ENCODE measurements at regions of chr19 and their contacts with region 1.

Region 1: GRCh38 chr19:5803752-5804515 is 933 bp upstream of the NRTN start:
- DNase-seq: peak; percentile 94
- ATAC-seq: peak; percentile 96
- H3K4me3 Mint-ChIP-seq: peak overlapping the region; percentile 70
- H3K27ac Mint-ChIP-seq: peak overlapping the region; percentile 60
- H3K4me1 Mint-ChIP-seq: peaks cover 25% of the 10 kb centered on the region
- H3K27me3 Mint-ChIP-seq: peaks cover 42% of the 10 kb centered on the region

Region 2: DNA sequence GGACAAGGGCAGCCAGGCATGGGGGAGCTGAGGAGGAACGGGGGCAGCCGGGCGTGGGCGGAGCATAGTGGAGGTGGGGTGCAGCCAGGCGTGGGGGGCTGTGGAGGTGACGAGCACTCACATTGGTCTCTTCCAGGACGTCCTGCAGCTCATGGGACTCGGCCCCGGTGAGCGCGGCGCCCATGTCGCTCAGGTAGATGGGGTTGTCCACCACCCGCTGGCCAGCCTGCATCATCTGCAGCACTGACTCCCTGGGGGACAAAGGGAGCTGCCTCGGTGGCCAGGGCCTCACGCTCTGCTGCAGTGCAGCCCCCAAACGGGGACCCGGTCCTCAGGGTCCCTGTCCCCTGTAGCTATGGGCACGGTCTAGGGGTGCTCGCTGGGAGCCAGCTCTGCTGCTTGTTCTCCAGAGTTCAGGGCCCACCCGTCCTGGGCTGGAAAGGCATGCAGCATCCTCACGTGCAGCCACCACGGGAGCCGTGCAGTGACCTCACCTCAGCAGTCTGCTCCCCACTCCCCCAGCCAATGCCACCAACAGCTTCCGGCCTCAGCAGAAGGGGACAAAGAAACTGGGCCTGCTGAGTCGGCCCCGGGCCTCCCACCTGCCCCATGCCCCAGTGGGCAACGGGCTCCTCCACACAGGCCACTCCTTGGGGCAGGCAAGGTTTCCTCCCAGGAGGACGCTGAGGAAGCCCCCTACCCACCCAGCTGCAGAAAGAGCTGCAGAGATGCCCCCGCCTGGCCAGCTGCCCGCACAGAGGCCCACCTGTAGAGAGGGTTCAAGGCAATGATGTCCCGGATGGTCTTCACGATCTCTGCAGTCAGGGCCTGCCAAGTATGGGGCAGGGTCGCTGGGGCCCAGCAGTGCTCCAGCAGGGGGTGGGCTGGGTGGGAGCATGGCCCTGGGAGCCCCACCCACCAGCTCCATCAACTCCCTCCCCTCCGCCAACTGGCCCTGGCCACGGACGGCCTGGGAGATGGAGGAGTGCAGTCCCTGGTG is 96.1 kb before region 1 on chr19:
- CTCF ChIA-PET with region 1: no interaction called
- POLR2A ChIA-PET with region 1: no interaction called
- DNase-seq: no peak
- ATAC-seq: peak; percentile 7
- H3K4me3 Mint-ChIP-seq: no peak overlapping the region
- H3K27ac Mint-ChIP-seq: no peak overlapping the region
- H3K4me1 Mint-ChIP-seq: no peaks in the 10 kb centered on the region
- H3K27me3 Mint-ChIP-seq: no peaks in the 10 kb centered on the region

Region 3: GRCh38 chr19:5790573-5791520 is 13.1 kb before region 1 on chr19 and contains the start of gene DUS3L:
- CTCF ChIA-PET with region 1: interaction called, 44 read pairs
- POLR2A ChIA-PET with region 1: interaction called, 3 read pairs
- DNase-seq: peak; percentile 98
- ATAC-seq: peak; percentile 96
- H3K4me3 Mint-ChIP-seq: peak within 1 kb of the TSS; percentile 100
- H3K27ac Mint-ChIP-seq: peak within 1 kb of the TSS; percentile 100
- H3K4me1 Mint-ChIP-seq: peaks cover 16% of the 10 kb centered on the region
- H3K27me3 Mint-ChIP-seq: no peaks in the 10 kb centered on the region
- total RNA-seq, gene DUS3L: 56.6 to 66.3 TPM

Region 4: DNA sequence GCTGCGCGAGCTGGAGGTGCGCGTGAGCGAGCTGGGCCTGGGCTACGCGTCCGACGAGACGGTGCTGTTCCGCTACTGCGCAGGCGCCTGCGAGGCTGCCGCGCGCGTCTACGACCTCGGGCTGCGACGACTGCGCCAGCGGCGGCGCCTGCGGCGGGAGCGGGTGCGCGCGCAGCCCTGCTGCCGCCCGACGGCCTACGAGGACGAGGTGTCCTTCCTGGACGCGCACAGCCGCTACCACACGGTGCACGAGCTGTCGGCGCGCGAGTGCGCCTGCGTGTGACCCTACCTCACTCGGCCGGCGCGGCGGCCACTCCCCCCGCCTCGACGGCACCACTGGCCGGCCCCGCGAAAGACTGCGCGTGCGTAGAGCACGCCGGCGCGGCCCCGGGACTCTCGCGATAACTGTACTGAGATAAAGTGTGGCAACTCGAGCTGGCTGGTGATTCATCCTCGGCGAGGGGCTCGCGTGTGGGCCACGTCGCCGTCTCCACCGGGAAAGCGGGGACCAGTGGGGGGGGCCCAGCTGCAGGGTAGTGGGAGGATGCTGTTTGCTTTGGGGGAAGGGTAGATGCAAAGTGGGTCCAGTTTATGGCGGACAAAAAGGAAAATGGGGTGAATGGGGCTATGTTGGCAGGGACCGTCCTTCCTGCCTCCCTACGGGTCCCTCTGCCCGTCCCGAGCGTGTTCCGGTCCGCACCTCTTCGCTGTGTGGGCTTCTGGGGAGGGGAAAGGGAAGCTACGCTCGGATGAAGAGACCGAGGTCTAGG is 24.1 kb after region 1 on chr19:
- CTCF ChIA-PET with region 1: interaction called, 63 read pairs
- POLR2A ChIA-PET with region 1: interaction called, 9 read pairs
- DNase-seq: peak; percentile 96
- ATAC-seq: peak; percentile 86
- H3K4me3 Mint-ChIP-seq: peak overlapping the region; percentile 92
- H3K27ac Mint-ChIP-seq: peak overlapping the region; percentile 97
- H3K4me1 Mint-ChIP-seq: peaks cover 15% of the 10 kb centered on the region
- H3K27me3 Mint-ChIP-seq: no peaks in the 10 kb centered on the region

Region 5: GRCh38 chr19:5857203-5858081 is 53.5 kb after region 1 on chr19:
- CTCF ChIA-PET with region 1: no interaction called
- POLR2A ChIA-PET with region 1: no interaction called
- DNase-seq: no peak
- ATAC-seq: no peak
- H3K4me3 Mint-ChIP-seq: no peak overlapping the region
- H3K27ac Mint-ChIP-seq: no peak overlapping the region
- H3K4me1 Mint-ChIP-seq: peaks cover 4% of the 10 kb centered on the region
- H3K27me3 Mint-ChIP-seq: no peaks in the 10 kb centered on the region

Region 6: DNA sequence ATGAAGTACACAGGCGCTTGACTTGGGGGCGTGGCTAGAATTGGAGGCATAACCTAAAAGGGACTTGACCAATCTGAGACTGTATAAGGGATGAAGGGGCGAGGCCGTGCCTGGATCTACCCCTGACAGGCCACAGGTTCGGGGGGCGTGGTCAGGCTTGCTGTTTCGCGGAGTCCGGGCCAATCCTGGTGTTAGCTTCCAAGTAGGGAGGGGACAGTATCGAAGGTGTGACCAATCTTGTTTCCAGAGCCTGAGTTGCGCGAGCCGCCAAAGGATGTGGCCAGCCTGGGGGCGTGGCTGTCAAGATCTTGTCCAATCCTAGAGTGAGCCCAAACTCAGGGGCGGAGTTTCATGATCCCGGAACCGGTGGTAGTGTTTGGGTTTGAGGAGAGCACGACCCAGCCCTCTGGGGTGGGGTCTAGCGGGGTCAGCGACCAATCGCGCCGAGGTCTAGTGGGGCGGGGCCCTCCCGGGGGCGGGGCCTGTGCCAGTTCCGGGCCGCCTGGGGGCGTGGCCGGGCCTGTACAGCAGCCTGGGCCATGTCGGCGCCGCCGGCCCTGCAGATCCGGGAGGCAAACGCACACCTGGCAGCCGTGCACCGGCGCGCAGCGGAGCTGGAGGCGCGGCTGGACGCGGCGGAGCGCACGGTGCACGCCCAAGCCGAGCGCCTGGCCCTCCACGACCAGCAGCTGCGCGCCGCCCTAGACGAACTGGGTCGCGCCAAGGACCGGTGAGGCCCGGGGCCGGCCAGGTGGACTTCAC is 100.6 kb after region 1 on chr19 and contains the start of gene VMAC:
- CTCF ChIA-PET with region 1: interaction called, 61 read pairs
- POLR2A ChIA-PET with region 1: interaction called, 6 read pairs
- DNase-seq: peak; percentile 100
- ATAC-seq: peak; percentile 87
- H3K4me3 Mint-ChIP-seq: peak within 1 kb of the TSS; percentile 89
- H3K27ac Mint-ChIP-seq: peak within 1 kb of the TSS; percentile 100
- H3K4me1 Mint-ChIP-seq: peaks cover 26% of the 10 kb centered on the region
- H3K27me3 Mint-ChIP-seq: no peaks in the 10 kb centered on the region
- total RNA-seq, gene VMAC: 6.2 to 6.8 TPM

Region 7: DNA sequence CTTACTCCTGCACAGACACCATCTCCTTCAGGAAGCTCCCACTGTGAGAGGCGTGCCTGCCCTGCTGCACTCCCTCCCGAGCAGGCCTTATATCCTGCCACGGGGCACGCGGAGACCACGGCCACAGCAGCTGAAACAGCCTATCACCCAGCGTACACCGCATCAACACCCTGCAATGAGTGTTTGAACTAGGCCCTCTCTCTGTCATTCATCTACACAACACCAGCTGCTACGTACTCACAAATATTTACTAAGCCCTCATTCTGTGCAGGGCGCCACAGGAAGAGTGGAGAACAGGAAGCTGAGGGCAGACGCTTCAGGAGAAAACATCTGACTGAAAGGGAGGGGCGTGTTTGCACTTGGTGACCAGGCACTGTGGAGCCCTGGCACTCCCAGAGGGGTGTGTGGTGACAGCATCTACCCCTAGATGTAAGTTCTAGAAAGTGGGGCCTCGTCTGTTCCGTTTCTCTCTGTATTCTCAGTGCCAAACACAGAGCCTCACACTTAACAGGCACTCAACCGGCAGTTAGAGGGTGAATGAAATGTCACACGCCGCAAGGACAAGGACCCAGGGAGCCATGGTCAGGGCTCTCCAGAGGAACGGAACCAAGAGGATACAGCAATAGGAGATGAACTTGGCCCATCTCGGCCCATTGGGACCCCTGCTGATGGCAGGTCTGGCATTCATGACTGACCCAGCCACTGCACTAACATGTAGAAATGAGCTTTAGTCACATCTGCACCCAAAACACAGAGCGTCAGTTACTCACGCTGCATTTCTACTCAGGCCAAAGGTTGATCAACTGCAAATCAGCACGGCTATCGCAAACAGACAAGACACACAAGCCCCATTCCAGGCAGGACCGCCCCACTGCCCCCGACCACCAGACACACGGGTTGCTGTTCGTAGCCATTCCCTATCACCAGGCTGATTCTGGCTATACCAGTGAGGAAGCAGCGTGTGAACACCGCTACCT is 158.3 kb after region 1 on chr19:
- CTCF ChIA-PET with region 1: interaction called, 20 read pairs
- POLR2A ChIA-PET with region 1: no interaction called
- DNase-seq: peak; percentile 84
- ATAC-seq: peak; percentile 90
- H3K4me3 Mint-ChIP-seq: peak overlapping the region; percentile 52
- H3K27ac Mint-ChIP-seq: peak overlapping the region; percentile 96
- H3K4me1 Mint-ChIP-seq: peaks cover 93% of the 10 kb centered on the region
- H3K27me3 Mint-ChIP-seq: no peaks in the 10 kb centered on the region

Region 8: GRCh38 chr19:5977785-5978605 is 174.1 kb after region 1 on chr19 and contains the start of gene RANBP3:
- CTCF ChIA-PET with region 1: interaction called, 25 read pairs
- POLR2A ChIA-PET with region 1: no interaction called
- DNase-seq: peak; percentile 99
- ATAC-seq: peak; percentile 98
- H3K4me3 Mint-ChIP-seq: peak within 1 kb of the TSS; percentile 99
- H3K27ac Mint-ChIP-seq: peak within 1 kb of the TSS; percentile 95
- H3K4me1 Mint-ChIP-seq: peaks cover 60% of the 10 kb centered on the region
- H3K27me3 Mint-ChIP-seq: no peaks in the 10 kb centered on the region
- total RNA-seq, gene RANBP3: 82.2 to 93.6 TPM

Region 9: GRCh38 chr19:6021878-6022569 is 218.1 kb after region 1 on chr19:
- CTCF ChIA-PET with region 1: interaction called, 47 read pairs
- POLR2A ChIA-PET with region 1: interaction called, 4 read pairs
- DNase-seq: peak; percentile 87
- ATAC-seq: peak; percentile 93
- H3K4me3 Mint-ChIP-seq: no peak overlapping the region
- H3K27ac Mint-ChIP-seq: no peak overlapping the region
- H3K4me1 Mint-ChIP-seq: peaks cover 14% of the 10 kb centered on the region
- H3K27me3 Mint-ChIP-seq: no peaks in the 10 kb centered on the region

Measured in activated CD8-positive, alpha-beta T cell treated with anti-CD3 and anti-CD28 coated beads, Interleukin-2, amount 10 ng/mL, durations not matched to agents 7 days and 5 days (primary cell).